AG04449 (cell line): ENCODE measurements at regions of chr14 and their contacts with region 1.

Region 1: GRCh38 chr14:85535991-85536832 is 6.3 kb downstream of the FLRT2 start:
- DNase-seq: no peak
- H3K4me3 ChIP-seq: peak overlapping the region; percentile 31
- CTCF ChIP-seq: peak; percentile 24

Region 2: DNA sequence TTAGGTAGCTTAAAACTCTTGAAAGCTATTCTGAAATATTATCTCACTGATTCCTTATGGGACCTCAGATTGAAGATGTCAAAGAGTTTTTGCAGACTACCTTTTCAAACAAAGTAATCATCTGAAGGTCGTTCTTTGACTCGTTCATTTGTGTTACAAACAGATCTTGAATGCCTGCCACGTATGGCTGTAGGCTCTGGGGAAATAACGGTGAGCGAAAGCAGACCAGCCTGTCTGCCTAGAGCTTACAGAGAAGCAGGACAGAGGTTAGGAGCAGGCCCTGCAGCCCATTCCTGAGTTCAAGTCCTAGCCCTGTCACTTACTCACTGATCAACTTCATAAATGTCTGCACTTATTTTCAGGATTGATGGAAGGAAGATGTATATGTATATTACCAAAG is 77.3 kb after region 1 on chr14:
- CTCF ChIA-PET with region 1: interaction called, 21 read pairs
- POLR2A ChIA-PET with region 1: no interaction called
- DNase-seq: no peak
- H3K4me3 ChIP-seq: no peak overlapping the region
- CTCF ChIP-seq: no peak